Activated T-helper 1 cell treated with anti-CD3 and anti-CD28 coated beads, Interleukin-12 subunit alpha, Interleukin-12 subunit beta, Interleukin-2, Interleukin-4 antibody, amounts not matched to agents 30 ng/mL and 10 ng/mL and 1 ng/mL, durations not matched to agents 14 hours and 24 hours and 36 hours (primary cell): ENCODE measurements at regions of chr5 and their contacts with region 1.

Region 1: DNA sequence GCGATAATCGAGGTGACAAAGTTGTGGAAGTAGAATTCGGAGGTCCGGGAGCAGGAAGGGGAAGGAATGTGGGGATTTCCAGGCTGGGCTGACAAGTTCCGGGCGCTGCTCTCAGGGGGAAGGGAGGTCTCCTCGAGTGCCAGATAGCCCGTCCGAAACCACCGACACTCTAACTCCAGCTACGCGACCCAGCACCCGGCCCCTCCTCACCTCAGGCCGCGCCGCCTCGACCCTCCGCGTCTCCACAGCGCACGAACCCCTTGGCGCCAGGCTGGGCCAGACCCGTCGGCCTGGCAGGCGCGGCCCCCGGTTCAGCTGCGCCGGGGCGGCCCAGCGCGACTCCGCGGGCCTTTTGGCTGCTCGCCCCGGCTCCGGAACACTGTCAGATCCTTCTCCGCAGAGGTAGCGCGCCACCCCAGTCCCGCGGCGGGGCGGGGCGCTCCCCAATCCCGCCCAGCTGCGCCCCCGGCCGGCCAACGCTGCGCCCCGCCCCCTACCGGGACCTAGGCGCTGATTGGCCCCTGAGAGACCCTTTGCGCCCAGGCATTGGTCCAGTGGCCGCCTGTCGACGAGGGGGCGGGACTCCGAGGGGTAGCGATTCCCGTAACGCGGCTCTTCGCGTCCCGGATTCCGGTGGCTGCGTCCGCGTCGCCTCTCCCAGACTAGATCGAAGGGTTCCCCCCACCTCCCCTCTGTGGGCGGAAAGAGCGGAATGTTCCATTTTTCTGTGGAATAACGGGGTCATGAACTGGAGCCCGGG is at the start of gene IL6ST:
- DNase-seq: peak; percentile 95
- H3K4me3 Mint-ChIP-seq: peak within 1 kb of the TSS; percentile 95
- H3K27ac Mint-ChIP-seq: peak within 1 kb of the TSS; percentile 95
- H3K4me1 Mint-ChIP-seq: peaks cover 66% of the 10 kb centered on the region
- H3K27me3 Mint-ChIP-seq: no peaks in the 10 kb centered on the region
- total RNA-seq, gene IL6ST: 85.8 and 86.1 TPM in 2 replicates

Region 2: GRCh38 chr5:56012281-56012963 is 17.7 kb after region 1 on chr5:
- intact Hi-C with region 1: loop called (anchors 1 kb)
- DNase-seq: peak; percentile 21
- H3K4me3 Mint-ChIP-seq: peak overlapping the region; percentile 0
- H3K27ac Mint-ChIP-seq: peak overlapping the region; percentile 12
- H3K4me1 Mint-ChIP-seq: peaks cover 32% of the 10 kb centered on the region
- H3K27me3 Mint-ChIP-seq: no peaks in the 10 kb centered on the region

Region 3: DNA sequence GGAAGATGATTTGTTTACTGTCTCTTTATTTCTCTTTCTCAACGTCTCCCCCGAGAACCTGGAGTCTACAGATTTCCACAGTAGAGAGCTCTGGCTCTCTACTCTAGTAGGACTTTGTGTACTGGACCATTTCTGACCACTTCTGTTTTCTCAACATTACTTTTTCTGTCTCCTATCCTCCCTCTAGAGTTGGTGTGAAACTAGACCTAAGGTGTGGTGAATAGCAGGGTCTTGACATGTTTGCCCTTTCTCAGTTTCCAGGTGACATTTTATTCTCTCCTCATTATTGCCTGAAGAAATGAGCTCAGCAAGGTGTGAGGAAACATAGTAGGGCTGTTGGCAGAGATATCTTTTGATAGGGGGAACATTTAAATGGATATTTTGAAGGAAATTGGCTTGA is 62.1 kb after region 1 on chr5:
- intact Hi-C with region 1: loop called (anchors 1 kb)
- DNase-seq: no peak
- H3K4me3 Mint-ChIP-seq: no peak overlapping the region
- H3K27ac Mint-ChIP-seq: no peak overlapping the region
- H3K4me1 Mint-ChIP-seq: peaks cover 52% of the 10 kb centered on the region
- H3K27me3 Mint-ChIP-seq: peaks cover 5% of the 10 kb centered on the region

Region 4: DNA sequence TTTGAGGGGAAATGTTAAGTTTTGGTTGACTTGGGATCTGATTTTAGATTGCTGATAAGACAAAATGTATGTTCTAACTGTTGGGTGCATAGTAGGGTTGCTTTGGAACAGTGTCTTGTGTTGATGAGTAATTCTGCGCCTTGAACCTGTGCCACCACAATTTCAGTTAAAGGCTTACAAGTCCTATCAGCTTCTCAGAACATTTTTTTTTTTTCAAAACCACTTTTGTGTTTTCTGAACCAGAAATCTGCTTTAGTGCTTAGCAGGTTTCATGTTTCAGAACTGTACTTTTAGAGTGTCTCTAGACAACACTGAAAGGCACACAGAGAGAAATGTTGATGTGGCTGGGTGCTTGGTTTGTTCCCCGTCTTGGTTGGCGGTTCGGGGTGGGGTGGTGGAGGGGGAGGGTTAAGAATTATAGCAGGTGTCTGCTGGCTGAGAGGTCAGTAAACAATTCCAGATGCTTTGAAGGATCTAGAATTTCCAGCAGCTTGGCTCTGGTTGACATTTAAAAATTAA is 153.8 kb after region 1 on chr5:
- intact Hi-C with region 1: loop called (anchors 1 kb)
- DNase-seq: peak; percentile 43
- H3K4me3 Mint-ChIP-seq: peak overlapping the region; percentile 23
- H3K27ac Mint-ChIP-seq: peak overlapping the region; percentile 81
- H3K4me1 Mint-ChIP-seq: peaks cover 60% of the 10 kb centered on the region
- H3K27me3 Mint-ChIP-seq: no peaks in the 10 kb centered on the region

Region 5: DNA sequence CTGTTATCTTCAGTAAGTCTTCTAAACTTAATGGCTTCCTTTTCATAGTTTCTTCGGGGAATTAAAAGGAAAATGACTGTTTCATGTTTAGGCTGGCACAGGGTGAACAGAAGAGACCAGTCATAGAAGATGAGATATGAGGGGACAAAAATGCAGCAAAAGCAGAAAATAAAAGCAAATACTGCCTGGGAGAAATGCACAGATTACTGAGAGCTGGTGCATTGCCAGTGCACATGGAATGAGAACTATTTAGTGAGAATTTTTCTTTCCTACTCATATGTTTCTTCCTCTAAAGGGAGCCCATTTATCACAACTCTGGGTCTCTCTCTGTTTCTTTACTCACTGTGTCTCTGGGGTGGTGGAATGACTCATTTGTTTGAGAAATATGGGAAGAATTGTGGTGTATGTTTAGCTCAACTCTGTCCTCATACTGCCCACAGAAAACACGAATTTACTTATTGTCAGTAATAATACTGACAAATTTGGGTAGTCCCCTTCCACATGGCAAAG is 264.3 kb after region 1 on chr5:
- intact Hi-C with region 1: loop called (anchors 5 kb)
- DNase-seq: no peak
- H3K4me3 Mint-ChIP-seq: no peak overlapping the region
- H3K27ac Mint-ChIP-seq: no peak overlapping the region
- H3K4me1 Mint-ChIP-seq: no peaks in the 10 kb centered on the region
- H3K27me3 Mint-ChIP-seq: peaks cover 14% of the 10 kb centered on the region